IMR-90 (cell line): ENCODE measurements at regions of chr13 and their contacts with region 1.

Region 1: GRCh38 chr13:20633802-20634201 is 66.8 kb downstream of the IFT88 start:
- DNase-seq: no peak
- ATAC-seq: no peak
- H3K4me3 ChIP-seq: no peak overlapping the region
- H3K27ac ChIP-seq: no peak overlapping the region
- H3K4me1 ChIP-seq: no peaks in the 10 kb centered on the region
- H3K27me3 ChIP-seq: no peaks in the 10 kb centered on the region
- CTCF ChIP-seq: no peak
- POLR2A ChIP-seq: no peak
- RAD21 ChIP-seq: no peak

Region 2: DNA sequence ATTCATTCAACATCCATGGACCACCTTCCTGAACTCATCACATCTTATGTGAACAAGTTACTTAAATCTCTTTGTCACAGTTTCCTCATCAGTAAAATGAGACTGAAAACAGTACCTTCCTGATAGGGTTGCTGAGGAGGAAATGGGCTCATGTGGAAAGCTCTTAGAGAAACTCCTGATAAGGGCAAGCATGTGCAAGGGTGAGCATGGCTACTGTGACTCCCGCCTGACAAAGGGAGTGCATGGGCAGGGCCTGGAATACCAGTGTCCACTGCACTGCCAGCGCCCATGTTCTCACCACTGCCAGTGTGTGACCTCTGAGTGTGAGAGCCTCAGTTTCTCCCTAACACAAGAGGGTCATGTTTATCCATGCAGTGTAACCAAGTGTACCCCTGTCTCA is 42.4 kb after region 1 on chr13:
- CTCF ChIA-PET with region 1: interaction called, 3 read pairs
- POLR2A ChIA-PET with region 1: no interaction called
- dilution Hi-C with region 1: no loop called
- in situ Hi-C with region 1: loop called (anchors 5 kb)
- intact Hi-C with region 1: no loop called
- DNase-seq: no peak
- ATAC-seq: no peak
- H3K4me3 ChIP-seq: no peak overlapping the region
- H3K27ac ChIP-seq: no peak overlapping the region
- H3K4me1 ChIP-seq: peaks cover 2% of the 10 kb centered on the region; the same call in 1 of the 2 replicates
- H3K27me3 ChIP-seq: no peaks in the 10 kb centered on the region
- CTCF ChIP-seq: no peak
- POLR2A ChIP-seq: no peak
- RAD21 ChIP-seq: no peak